H1 (cell line): ENCODE measurements at regions of chr3 and their contacts with region 1.

Region 1: GRCh38 chr3:4712143-4712542 is 219.0 kb downstream of the ITPR1 start:
- DNase-seq: no peak
- H3K4me3 ChIP-seq: no peak overlapping the region
- H3K27ac ChIP-seq: no peak overlapping the region
- H3K4me1 ChIP-seq: peaks cover 0 to 13% (median 8%) of the 10 kb centered on the region in 4 experiments; a peak in 5 of 7 replicates
- H3K27me3 ChIP-seq: no peaks in the 10 kb centered on the region
- CTCF ChIP-seq: no peak
- EP300 ChIP-seq: no peak
- POLR2A ChIP-seq: no peak
- RAD21 ChIP-seq: no peak

Region 2: DNA sequence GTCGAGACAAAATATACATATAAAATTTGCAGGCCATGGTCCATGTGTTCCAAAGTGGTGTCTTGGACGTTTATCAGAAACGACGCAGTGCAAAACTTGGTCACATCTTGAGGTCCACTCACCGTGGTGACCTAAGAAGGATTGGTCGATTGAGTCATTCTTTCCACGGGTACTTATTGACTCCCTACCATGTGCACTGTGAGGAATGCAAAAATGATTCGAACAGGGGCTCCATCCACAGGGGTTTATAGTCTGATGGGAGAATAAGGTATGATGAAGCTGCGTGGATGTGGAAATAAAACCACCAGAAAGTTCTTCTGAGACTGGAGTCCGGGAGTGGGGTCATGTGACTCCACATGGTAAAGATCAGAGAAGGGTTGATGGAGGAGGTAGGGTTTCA is 33.8 kb before region 1 on chr3:
- CTCF ChIA-PET with region 1: interaction called, 13 read pairs
- POLR2A ChIA-PET with region 1: no interaction called
- DNase-seq: no peak
- H3K4me3 ChIP-seq: no peak overlapping the region
- H3K27ac ChIP-seq: no peak overlapping the region
- H3K4me1 ChIP-seq: peaks cover 0 to 5% (median 0%) of the 10 kb centered on the region in 4 experiments; a peak in 3 of 7 replicates
- H3K27me3 ChIP-seq: no peaks in the 10 kb centered on the region; a peak in 1 of 7 replicates
- CTCF ChIP-seq: no peak
- EP300 ChIP-seq: no peak
- POLR2A ChIP-seq: no peak
- RAD21 ChIP-seq: no peak

Region 3: GRCh38 chr3:4730719-4731118 is 18.6 kb after region 1 on chr3:
- CTCF ChIA-PET with region 1: interaction called, 10 read pairs
- POLR2A ChIA-PET with region 1: no interaction called
- DNase-seq: no peak
- H3K4me3 ChIP-seq: no peak overlapping the region
- H3K27ac ChIP-seq: no peak overlapping the region
- H3K4me1 ChIP-seq: peaks cover 0 to 5% (median 2%) of the 10 kb centered on the region in 4 experiments; a peak in 6 of 7 replicates
- H3K27me3 ChIP-seq: no peaks in the 10 kb centered on the region
- CTCF ChIP-seq: no peak
- EP300 ChIP-seq: no peak
- POLR2A ChIP-seq: no peak
- RAD21 ChIP-seq: no peak

Region 4: DNA sequence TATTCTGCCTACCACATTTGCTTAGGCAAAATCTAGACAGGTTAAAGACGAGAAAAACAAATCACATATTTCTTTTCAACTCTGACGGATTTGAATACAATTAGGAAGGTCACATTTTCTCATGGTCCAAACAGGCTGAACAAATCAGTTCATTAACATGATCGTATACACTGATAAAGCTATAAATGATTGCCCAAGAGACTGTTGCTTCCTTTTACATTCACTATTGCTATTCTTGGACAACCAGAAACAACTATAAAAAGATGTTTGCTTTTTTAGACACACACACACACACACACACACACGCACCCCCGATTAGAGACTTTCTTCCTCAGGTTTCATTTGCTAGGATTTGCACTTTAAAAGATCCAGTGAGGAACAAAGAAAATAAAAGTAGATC is 144.8 kb after region 1 on chr3:
- CTCF ChIA-PET with region 1: no interaction called
- POLR2A ChIA-PET with region 1: no interaction called
- DNase-seq: no peak
- H3K4me3 ChIP-seq: no peak overlapping the region
- H3K27ac ChIP-seq: no peak overlapping the region
- H3K4me1 ChIP-seq: no peaks in the 10 kb centered on the region
- H3K27me3 ChIP-seq: no peaks in the 10 kb centered on the region
- CTCF ChIP-seq: no peak
- EP300 ChIP-seq: no peak
- POLR2A ChIP-seq: no peak
- RAD21 ChIP-seq: no peak

Region 5: DNA sequence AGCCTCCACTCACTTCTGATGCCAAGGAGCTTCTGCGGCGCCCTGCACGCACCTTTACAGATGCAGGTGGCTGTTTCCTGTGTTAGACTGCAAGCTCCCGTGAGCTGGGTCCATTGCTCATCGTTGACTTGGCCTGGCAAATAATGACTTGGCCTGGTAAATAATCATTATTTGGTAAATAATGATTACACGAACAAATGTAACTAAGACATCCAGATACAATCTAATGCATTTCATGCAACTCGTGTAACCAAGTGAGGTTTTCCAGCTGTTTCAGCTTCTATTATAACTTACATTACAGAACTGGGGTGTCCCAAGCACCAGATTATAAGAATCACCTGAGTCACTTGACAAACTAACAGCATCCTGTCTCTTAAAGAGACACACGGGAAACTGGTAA is 175.0 kb after region 1 on chr3:
- CTCF ChIA-PET with region 1: no interaction called
- POLR2A ChIA-PET with region 1: no interaction called
- DNase-seq: no peak
- H3K4me3 ChIP-seq: no peak overlapping the region
- H3K27ac ChIP-seq: no peak overlapping the region
- H3K4me1 ChIP-seq: no peaks in the 10 kb centered on the region
- H3K27me3 ChIP-seq: no peaks in the 10 kb centered on the region
- CTCF ChIP-seq: no peak
- EP300 ChIP-seq: no peak
- POLR2A ChIP-seq: no peak
- RAD21 ChIP-seq: no peak

Region 6: GRCh38 chr3:4978204-4978965 is 266.2 kb after region 1 on chr3:
- CTCF ChIA-PET with region 1: interaction called, 54 read pairs
- POLR2A ChIA-PET with region 1: interaction called, 3 read pairs
- DNase-seq: peak; percentile 70 to 85
- H3K4me3 ChIP-seq: peak overlapping the region; percentile 51 to 71 (median 58)
- H3K27ac ChIP-seq: no peak overlapping the region
- H3K4me1 ChIP-seq: peaks cover 2 to 8% (median 4%) of the 10 kb centered on the region in 4 experiments; a peak in 5 of 7 replicates
- H3K27me3 ChIP-seq: peaks cover 4 to 36% (median 22%) of the 10 kb centered on the region in 4 experiments
- CTCF ChIP-seq: no peak
- EP300 ChIP-seq: no peak
- POLR2A ChIP-seq: no peak
- RAD21 ChIP-seq: 0 out of 4 replicates have a peak, but pooled peaks of 1 of the 2 experiments have one; percentile 3

Region 7: DNA sequence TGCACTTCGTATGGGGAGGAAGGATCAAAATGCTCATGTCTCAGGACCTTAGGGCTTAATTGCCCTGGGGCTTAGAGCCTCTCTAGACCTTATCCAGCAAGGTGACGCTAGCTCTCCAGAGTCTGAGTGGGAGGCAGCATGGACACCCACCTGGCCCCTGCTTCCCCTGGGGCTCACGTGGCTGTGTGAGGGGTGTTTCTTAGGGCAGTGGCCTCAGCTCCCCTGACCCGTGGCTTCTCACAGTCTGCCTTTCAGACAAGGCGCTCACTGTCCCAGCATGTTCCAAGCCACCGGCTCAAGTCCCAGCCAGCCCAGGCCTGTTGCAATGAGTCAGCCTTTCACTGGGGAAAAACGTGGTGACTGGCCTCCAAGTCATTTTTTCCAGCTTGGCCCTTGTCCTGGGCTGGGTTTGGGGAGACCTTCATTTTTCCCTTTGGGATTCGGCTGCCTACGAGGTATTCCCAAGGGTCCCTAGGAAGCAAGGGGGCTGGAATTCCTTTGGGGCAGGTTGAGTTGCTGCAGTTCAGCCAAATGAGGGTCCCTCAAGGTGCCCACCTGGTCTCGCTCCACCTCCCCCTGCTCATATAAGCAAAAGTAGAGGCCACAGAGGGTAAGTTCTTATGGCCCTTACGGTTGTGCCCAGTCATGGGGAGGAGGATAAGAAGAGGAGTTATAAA is 282.8 kb after region 1 on chr3:
- CTCF ChIA-PET with region 1: interaction called, 10 read pairs
- POLR2A ChIA-PET with region 1: no interaction called
- DNase-seq: no peak
- H3K4me3 ChIP-seq: no peak overlapping the region
- H3K27ac ChIP-seq: no peak overlapping the region
- H3K4me1 ChIP-seq: peaks cover 0 to 3% (median 1%) of the 10 kb centered on the region in 4 experiments; a peak in 5 of 7 replicates
- H3K27me3 ChIP-seq: no peaks in the 10 kb centered on the region; a peak in 1 of 7 replicates
- CTCF ChIP-seq: no peak
- EP300 ChIP-seq: no peak
- POLR2A ChIP-seq: no peak
- RAD21 ChIP-seq: no peak

Region 8: DNA sequence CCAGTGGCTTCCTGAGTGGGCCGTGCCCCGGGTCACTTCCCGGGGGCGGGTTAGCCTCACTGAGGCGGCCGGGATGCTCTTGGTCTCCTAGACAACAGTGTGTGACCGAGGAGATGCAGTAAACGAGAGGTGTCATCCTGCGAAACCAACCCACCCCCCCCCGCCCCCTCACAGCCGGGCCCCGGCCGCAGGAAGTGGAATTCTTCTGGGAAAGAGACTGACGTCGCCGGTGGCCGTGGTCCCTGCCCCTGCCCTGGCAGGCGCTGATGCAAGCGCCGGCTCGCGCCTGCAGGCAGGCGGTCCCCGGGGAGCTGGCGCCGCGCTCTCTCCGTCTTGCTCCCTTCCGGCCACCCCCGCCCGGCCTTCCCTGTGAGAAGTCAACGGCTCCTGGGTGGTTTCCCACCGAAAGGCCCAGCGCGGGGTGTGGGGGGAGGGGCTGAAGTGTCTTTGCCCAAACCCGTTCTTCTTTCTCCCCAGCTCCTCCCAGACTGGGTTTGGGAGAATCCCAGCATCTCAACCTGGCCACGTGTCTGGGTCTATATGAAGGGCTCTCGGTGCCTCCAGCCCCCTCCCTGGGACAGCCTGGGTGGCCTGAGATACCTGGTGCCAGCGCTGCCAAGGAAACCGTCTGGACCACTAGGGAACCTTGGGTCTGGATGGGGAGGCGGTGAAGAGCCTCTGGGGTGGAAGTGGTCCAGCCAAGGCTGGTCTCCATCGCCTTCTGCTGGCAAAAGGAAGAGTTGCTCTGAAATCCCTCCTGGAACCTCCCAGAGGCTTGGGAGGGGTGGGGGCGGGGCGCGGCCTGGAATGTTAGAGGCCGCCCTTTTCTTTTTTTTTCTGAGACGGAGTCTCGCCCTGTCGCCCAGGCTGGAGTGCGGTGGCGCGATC is 314.4 kb after region 1 on chr3:
- CTCF ChIA-PET with region 1: interaction called, 27 read pairs
- POLR2A ChIA-PET with region 1: interaction called, 5 read pairs
- DNase-seq: peak; percentile 84 to 85
- H3K4me3 ChIP-seq: peak overlapping the region; percentile 21 to 89 (median 63)
- H3K27ac ChIP-seq: no peak overlapping the region
- H3K4me1 ChIP-seq: peaks cover 0 to 5% (median 1%) of the 10 kb centered on the region in 4 experiments; a peak in 2 of 7 replicates
- H3K27me3 ChIP-seq: no peaks in the 10 kb centered on the region
- CTCF ChIP-seq: peak; percentile 67 to 89 (median 73)
- EP300 ChIP-seq: 0 out of 3 replicates have a peak, but pooled peaks of 1 of the 2 experiments have one; percentile 6
- POLR2A ChIP-seq: peak in 1 of 2 experiments; percentile 50; a peak in 1 of 3 replicates
- RAD21 ChIP-seq: peak; percentile 91 to 93